OCI-LY7 (cell line): ENCODE measurements at regions of chr11 and their contacts with region 1.

Region 1: GRCh38 chr11:85647604-85648299 is at the start of gene TMEM126A:
- DNase-seq: peak; percentile 91
- H3K4me3 ChIP-seq: peak within 1 kb of the TSS; percentile 74
- H3K27ac ChIP-seq: peak within 1 kb of the TSS; percentile 72
- H3K4me1 ChIP-seq: peaks cover 33% of the 10 kb centered on the region
- CTCF ChIP-seq: no peak
- total RNA-seq, gene TMEM126A: 16.8 and 16.9 TPM in 2 replicates

Region 2: DNA sequence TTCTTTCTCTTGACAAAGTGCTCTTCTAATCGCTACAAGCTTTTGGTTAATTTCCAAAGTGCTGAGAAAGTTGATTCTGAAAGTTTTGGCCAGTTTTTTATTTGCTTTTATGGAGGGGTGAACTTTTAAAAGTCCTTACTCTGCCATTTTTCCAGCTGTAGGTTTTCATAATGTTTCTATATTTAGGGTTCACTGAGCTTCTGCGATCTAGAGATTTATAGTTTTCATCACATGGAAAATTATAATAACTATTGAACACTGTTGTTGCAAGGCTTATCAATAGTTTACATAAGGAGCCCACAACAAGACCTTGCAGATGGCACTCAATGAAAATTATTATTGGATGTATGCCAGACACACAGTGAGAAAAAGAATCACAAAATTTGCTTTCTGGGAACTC is 75.7 kb before region 1 on chr11:
- CTCF ChIA-PET with region 1: no interaction called
- POLR2A ChIA-PET with region 1: no interaction called
- intact Hi-C with region 1: no loop called
- DNase-seq: no peak
- H3K4me3 ChIP-seq: no peak overlapping the region
- H3K27ac ChIP-seq: no peak overlapping the region
- H3K4me1 ChIP-seq: no peaks in the 10 kb centered on the region
- CTCF ChIP-seq: no peak

Region 3: DNA sequence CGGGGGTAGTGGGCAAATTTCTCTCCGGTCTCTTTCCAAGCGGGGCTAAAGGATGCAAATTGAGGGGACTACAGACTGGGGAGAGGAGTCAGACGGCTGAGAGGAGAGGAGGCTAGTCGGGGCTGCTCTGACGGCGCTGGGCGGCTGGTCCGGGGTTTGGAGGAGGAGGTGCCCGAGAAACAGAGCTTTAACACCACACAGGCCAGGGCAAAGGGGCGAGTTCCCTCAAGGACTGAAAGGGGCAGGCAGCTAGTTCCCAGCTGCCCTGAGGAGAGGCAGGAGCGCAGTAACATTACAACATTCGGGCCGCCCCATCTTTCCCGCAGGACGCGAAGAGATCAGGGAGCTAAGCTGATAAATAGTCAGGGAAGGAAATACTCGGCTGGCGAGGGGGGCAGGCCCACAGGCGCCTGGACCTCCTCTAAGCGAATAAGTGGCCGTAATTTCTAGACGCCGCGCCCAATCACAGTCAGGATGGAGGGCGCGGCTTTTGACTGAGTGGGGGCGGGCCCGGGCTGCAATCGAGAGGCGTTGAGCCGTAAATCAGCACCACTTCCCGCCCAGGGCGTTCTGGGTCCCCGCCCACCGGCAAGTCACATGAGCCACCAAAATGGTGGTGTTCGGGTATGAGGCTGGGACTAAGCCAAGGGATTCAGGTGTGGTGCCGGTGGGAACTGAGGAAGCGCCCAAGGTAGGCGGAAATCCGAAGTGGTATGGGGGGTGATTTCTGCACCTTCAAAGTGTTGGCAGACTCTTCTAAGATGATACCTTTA is 19.6 kb before region 1 on chr11 and contains the start of gene TMEM126B:
- CTCF ChIA-PET with region 1: interaction called, 5 read pairs
- POLR2A ChIA-PET with region 1: interaction called, 54 read pairs
- intact Hi-C with region 1: loop called (anchors 1 kb)
- DNase-seq: peak; percentile 96
- H3K4me3 ChIP-seq: peak within 1 kb of the TSS; percentile 96
- H3K27ac ChIP-seq: peak within 1 kb of the TSS; percentile 40
- H3K4me1 ChIP-seq: peaks cover 35% of the 10 kb centered on the region
- CTCF ChIP-seq: no peak
- total RNA-seq, gene TMEM126B: 45.4 and 47.4 TPM in 2 replicates

Region 4: GRCh38 chr11:85634747-85635146 is 13.0 kb before region 1 on chr11:
- CTCF ChIA-PET with region 1: interaction called, 4 read pairs
- POLR2A ChIA-PET with region 1: interaction called, 54 read pairs
- intact Hi-C with region 1: loop called (anchors 1 kb)
- DNase-seq: no peak
- H3K4me3 ChIP-seq: no peak overlapping the region
- H3K27ac ChIP-seq: no peak overlapping the region
- H3K4me1 ChIP-seq: peaks cover 8% of the 10 kb centered on the region
- CTCF ChIP-seq: no peak